Sciatic nerve (tissue), 2 donors: ENCODE measurements at regions of chr3 and their contacts with region 1.

Region 1: DNA sequence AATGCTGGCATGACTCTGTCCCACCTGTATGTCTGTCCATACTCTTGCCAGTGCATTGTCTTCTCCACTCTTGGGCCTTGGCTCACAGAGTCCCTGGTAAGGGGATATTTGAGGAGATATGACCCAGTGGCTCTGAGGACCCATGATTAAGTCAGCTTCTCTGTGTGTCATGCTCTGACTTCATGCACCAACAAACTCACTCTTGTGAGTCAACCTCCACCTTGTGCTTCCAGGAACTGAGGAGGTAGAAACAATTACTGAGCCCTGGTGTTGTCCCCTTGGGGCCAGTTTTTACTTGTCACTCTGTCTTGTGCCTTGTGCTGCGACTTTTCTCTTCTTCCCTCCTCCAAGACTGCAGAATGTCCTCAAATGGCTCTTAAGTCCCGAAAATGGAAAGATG is 127.1 kb downstream of the ABHD5 start:
- DNase-seq: no peak
- ATAC-seq: no peak

Region 2: GRCh38 chr3:43843386-43843785 is 25.6 kb after region 1 on chr3:
- intact Hi-C with region 1: no loop called
- DNase-seq: no peak
- ATAC-seq: no peak

Region 3: DNA sequence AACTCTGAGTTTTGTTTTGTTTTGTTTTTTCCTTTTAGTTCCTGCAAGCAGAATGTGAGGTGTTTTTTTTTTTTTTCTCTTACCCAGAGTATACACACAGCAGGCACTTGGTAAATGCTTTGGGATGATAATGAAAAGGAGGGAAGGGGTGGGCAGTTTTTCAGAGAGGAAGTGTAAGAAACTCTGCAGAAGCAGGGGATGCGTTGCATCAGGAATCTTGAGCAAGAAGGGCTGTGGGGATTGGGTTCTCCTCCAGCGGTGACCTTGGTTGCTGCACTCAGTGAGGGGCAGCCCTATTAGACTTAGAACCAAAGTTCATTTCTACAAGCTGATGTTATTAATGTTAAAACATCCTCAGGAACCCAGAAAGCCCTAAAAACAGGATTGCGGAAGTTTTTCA is 1440.5 kb after region 1 on chr3:
- intact Hi-C with region 1: loop called (anchors 10 kb)
- DNase-seq: no peak
- ATAC-seq: no peak